Breast epithelium (tissue), 4 donors: ENCODE measurements at regions of chr7 and their contacts with region 1.

Region 1: GRCh38 chr7:117127585-117128168 is 174.4 kb downstream of the ST7 start:
- DNase-seq: no peak
- H3K4me3 ChIP-seq: no peak overlapping the region
- H3K27ac ChIP-seq: no peak overlapping the region
- H3K4me1 ChIP-seq: no peaks in the 10 kb centered on the region
- H3K27me3 ChIP-seq: no peaks in the 10 kb centered on the region
- CTCF ChIP-seq: peak; percentile 54 to 78 (median 64)
- POLR2A ChIP-seq: no peak

Region 2: DNA sequence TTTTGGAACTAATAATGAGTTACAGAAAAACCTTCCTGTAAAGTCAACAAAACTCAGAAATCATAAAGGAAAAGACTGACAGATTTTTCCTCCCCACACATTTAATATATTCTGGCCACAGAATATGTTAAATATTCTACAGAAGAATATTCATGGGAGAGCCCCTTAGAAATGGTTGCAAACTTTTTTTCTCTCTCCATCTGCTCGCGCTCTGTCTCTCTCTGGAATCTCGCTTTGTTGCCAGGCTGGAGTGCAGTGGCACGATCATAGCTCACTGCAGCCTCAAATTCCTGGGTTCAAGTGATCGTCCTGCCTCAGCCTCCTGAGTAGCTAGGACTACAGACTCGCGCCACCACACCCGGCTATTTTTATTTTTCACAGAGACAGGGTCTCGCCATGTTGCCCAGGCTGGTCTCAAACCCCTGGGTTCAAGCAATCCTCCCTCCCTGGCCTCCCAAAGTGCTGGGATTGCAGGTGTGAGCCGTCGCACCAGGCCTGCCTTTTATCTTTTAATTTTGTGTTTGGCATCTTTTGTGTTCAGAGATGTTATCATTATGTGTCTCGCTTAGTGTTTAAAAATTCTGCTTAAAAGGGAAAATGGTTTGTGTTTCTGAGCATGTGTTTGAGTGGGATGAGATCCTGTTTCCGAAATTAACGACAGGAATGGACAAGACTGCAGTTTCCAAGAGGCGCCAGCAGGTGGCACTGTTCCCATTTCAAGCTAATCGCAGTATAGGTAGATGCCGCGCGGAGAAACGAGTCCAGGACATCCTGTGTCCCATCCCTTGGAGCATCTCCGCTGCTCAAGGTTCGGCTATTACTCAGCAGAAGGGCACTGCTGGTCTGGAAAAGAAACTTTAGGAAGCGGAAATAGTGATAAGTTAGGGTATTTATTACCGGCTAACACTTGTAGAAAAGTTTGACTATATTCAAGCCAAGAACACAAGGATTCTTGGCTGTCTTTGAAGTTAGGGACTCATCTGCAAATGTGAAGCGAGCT is 197.5 kb before region 1 on chr7:
- intact Hi-C with region 1: loop called (anchors 10 kb)
- DNase-seq: peak; percentile 76 to 82
- H3K4me3 ChIP-seq: no peak overlapping the region
- H3K27ac ChIP-seq: no peak overlapping the region
- H3K4me1 ChIP-seq: no peaks in the 10 kb centered on the region
- H3K27me3 ChIP-seq: no peaks in the 10 kb centered on the region
- CTCF ChIP-seq: peak; percentile 78 to 90 (median 90)
- POLR2A ChIP-seq: no peak

Region 3: DNA sequence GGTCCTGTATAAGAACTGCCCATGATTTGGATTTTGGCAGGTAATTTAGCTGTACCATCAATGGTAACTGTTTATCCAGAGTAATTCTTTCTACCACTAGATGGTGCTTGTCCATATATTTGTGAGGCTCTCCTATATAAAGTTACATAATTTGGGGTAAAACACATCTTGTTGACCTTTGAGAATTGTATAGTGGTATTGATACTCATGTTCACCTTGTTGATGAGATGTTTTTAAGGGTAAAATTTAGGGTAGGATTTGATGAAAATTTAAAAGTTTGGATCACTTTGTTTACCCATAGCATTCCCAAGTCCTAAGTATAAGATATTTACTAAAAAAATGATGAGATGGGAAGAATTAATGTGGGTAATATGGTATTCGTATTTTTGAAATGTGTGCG is 142.8 kb before region 1 on chr7:
- intact Hi-C with region 1: loop called (anchors 10 kb)
- DNase-seq: no peak
- H3K4me3 ChIP-seq: no peak overlapping the region
- H3K27ac ChIP-seq: no peak overlapping the region
- H3K4me1 ChIP-seq: no peaks in the 10 kb centered on the region
- H3K27me3 ChIP-seq: no peaks in the 10 kb centered on the region
- CTCF ChIP-seq: peak in 2 of 3 donors; percentile 47 to 51
- POLR2A ChIP-seq: no peak

Region 4: DNA sequence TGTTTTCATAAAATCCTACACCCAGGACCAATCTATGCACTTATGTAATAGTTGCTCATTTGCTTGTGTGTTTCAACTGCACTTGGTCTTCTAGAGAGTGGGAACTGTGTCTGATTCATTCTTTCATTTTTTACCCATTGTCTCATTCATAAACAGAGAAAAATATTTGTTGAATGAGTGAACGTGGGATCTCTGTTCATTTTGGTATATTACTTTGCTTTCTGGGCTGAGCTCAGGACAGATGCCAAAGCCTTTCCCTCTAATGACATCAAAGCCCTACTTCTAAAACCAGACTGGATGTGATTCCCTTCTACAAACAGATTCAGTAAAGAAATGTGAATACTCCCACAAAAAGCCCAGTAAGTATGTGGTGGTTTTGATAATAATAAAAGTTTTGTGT is 29.2 kb before region 1 on chr7:
- intact Hi-C with region 1: no loop called
- DNase-seq: no peak
- H3K4me3 ChIP-seq: no peak overlapping the region
- H3K27ac ChIP-seq: no peak overlapping the region
- H3K4me1 ChIP-seq: no peaks in the 10 kb centered on the region
- H3K27me3 ChIP-seq: no peaks in the 10 kb centered on the region
- CTCF ChIP-seq: no peak
- POLR2A ChIP-seq: no peak

Region 5: GRCh38 chr7:117582219-117582704 is 454.6 kb after region 1 on chr7:
- intact Hi-C with region 1: no loop called
- DNase-seq: no peak
- H3K4me3 ChIP-seq: no peak overlapping the region
- H3K27ac ChIP-seq: no peak overlapping the region
- H3K4me1 ChIP-seq: no peaks in the 10 kb centered on the region
- H3K27me3 ChIP-seq: no peaks in the 10 kb centered on the region
- CTCF ChIP-seq: no peak
- POLR2A ChIP-seq: no peak